Activated CD4-positive, alpha-beta T cell treated with anti-CD3 and anti-CD28 coated beads, Interleukin-2, amount 10 ng/mL, durations not matched to agents 24 days and 14 days (primary cell): ENCODE measurements at regions of chr2 and their contacts with region 1.

Region 1: GRCh38 chr2:119759451-119760236 is at the start of gene PTPN4:
- DNase-seq: peak; percentile 98
- H3K4me3 Mint-ChIP-seq: peak within 1 kb of the TSS; percentile 92
- H3K27ac Mint-ChIP-seq: peak within 1 kb of the TSS; percentile 93
- H3K4me1 Mint-ChIP-seq: peaks cover 36% of the 10 kb centered on the region
- H3K27me3 Mint-ChIP-seq: no peaks in the 10 kb centered on the region
- total RNA-seq, gene PTPN4: 21.9 and 22.0 TPM in 2 replicates

Region 2: DNA sequence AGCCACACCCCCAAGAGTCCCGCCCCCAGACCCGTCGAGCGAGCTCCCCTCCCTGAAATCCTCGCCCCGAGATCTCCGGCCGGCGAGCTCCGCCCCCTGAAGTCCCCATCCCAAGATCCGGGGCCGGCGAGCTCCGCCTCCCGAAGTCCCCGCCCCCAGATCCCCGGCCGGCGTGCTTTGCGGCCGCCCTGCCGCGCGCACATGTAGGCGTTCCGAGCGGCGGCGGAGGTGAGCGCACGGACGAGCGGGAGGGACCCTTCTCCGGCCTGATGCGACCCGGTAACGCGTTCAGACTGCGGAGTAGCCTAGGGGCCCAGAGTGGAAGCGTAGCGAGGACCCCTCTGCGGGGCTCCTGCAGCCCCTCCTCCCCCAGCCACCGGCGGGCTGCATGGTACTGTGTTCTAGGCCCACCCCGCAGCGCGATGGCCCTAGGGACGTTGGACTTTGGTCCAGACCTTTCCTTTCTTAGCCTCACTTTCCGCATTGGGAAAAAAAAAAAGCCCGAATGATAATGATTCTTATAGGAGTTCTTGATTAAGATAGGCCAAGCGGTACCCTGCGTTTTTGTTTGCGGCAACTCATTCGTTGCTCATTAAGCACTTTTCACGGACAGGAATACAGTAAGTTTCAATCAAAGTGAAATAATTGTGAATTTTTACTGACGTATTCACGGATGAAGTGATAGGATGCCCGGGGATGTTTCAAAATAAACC is 80.5 kb before region 1 on chr2 and contains the start of gene TMEM177:
- intact Hi-C with region 1: loop called (anchors 1 kb)
- DNase-seq: peak; percentile 98
- H3K4me3 Mint-ChIP-seq: peak within 1 kb of the TSS; percentile 87
- H3K27ac Mint-ChIP-seq: peak within 1 kb of the TSS; percentile 76
- H3K4me1 Mint-ChIP-seq: peaks cover 31% of the 10 kb centered on the region
- H3K27me3 Mint-ChIP-seq: peaks cover 12% of the 10 kb centered on the region
- total RNA-seq, gene TMEM177: 19.0 and 20.6 TPM in 2 replicates

Region 3: GRCh38 chr2:119702918-119703401 is 56.7 kb before region 1 on chr2:
- intact Hi-C with region 1: loop called (anchors 2 kb)
- DNase-seq: peak; percentile 91
- H3K4me3 Mint-ChIP-seq: no peak overlapping the region
- H3K27ac Mint-ChIP-seq: no peak overlapping the region
- H3K4me1 Mint-ChIP-seq: peaks cover 10% of the 10 kb centered on the region
- H3K27me3 Mint-ChIP-seq: no peaks in the 10 kb centered on the region

Region 4: GRCh38 chr2:119862127-119862889 is 102.7 kb after region 1 on chr2:
- intact Hi-C with region 1: loop called (anchors 1 kb)
- DNase-seq: peak; percentile 64
- H3K4me3 Mint-ChIP-seq: peak overlapping the region; percentile 56
- H3K27ac Mint-ChIP-seq: peak overlapping the region; percentile 62
- H3K4me1 Mint-ChIP-seq: peaks cover 40% of the 10 kb centered on the region
- H3K27me3 Mint-ChIP-seq: no peaks in the 10 kb centered on the region

Region 5: DNA sequence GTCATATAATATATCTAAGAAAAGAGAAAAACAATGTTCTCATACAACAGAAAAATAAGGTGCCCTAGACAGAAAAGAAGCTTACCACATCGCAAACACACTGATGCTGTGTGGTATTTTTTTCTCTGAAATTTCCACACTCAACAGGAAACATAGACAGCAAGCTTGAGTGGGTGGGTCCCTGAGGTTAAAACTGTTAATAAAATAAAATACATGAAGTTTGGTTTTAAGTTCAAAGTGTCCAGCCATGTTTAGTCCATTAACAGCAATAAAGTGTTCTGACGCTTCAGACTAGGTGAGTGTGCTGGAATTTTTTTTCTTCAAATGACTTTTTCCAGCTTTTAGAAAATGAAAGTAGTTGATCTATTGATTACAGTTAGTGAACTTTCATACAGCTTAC is 169.9 kb after region 1 on chr2:
- intact Hi-C with region 1: loop called (anchors 2 kb)
- DNase-seq: peak; percentile 84
- H3K4me3 Mint-ChIP-seq: peak overlapping the region; percentile 75
- H3K27ac Mint-ChIP-seq: peak overlapping the region; percentile 85
- H3K4me1 Mint-ChIP-seq: peaks cover 45% of the 10 kb centered on the region
- H3K27me3 Mint-ChIP-seq: no peaks in the 10 kb centered on the region

Region 6: DNA sequence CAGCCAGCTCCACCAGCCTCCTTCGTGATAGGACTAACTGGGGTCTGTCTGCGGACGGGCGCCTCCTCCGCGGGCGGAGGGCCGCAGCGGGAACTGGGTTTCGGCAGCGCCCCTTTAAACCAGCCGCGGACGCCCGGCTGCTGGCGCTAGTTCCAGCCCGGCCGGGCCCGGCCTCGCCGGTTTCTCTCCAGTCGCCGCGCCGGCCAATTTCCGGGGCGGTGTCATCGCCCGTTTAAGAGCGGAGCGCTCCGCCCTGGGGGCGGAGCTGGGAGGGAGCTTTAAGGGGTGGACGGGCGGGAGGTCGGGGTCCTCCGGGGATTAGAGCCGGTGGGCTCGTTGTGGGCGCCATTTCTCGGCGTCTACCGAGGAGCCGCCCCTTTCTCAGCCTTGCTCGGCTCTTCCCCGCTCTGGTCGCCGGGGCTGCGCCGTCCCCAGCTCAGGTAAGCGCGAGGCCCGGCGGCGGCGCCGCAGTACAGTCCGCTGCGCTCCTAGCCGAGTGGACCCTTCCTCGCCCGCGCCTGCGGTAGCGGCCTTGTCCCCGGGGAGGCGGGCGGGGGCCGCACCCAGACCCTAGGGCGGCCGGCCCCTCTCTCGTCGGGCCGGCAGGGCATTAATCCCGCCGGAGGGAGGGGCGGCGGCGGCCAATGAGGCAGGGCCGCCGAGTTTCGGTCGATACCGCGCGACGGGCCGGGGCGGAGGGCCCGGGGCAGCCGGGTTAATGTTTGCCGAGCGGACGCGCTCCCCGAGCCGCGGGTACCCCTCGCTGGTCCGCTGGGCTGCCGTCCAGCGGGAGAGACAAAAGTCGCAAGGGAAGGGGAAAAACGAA is 253.3 kb after region 1 on chr2 and contains the start of gene EPB41L5:
- intact Hi-C with region 1: loop called (anchors 1 kb)
- DNase-seq: peak; percentile 94
- H3K4me3 Mint-ChIP-seq: peak within 1 kb of the TSS; percentile 75
- H3K27ac Mint-ChIP-seq: no peak within 1 kb of the TSS
- H3K4me1 Mint-ChIP-seq: peaks cover 11% of the 10 kb centered on the region
- H3K27me3 Mint-ChIP-seq: peaks cover 13% of the 10 kb centered on the region
- total RNA-seq, gene EPB41L5: 1.5 and 2.2 TPM in 2 replicates

Region 7: DNA sequence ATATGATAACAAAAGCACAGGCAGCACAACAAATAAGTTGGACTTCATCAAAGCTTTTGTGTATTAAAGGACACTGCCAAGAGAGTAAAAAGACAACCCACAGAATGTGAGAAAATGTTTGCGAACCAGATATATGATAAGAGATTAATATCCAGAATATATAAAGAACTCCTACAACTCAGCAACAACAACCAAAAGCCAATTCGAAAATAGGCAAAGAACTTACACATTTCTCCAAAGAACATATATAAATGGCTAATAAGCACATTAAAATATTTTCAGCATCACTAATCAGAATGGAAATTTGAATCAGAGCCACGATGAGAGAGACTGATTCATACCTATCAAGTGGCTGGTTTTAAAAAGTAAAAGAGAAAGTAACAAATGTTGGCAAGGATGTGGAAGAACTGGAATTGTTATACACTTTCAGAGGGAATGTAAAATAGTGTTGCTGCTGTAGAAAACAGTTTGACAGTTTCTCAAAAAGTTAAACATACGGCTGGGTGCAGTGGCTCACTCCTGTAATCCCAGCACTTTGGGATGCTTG is 278.4 kb after region 1 on chr2:
- intact Hi-C with region 1: no loop called
- DNase-seq: no peak
- H3K4me3 Mint-ChIP-seq: no peak overlapping the region
- H3K27ac Mint-ChIP-seq: no peak overlapping the region
- H3K4me1 Mint-ChIP-seq: no peaks in the 10 kb centered on the region
- H3K27me3 Mint-ChIP-seq: peaks cover 2% of the 10 kb centered on the region

Region 8: DNA sequence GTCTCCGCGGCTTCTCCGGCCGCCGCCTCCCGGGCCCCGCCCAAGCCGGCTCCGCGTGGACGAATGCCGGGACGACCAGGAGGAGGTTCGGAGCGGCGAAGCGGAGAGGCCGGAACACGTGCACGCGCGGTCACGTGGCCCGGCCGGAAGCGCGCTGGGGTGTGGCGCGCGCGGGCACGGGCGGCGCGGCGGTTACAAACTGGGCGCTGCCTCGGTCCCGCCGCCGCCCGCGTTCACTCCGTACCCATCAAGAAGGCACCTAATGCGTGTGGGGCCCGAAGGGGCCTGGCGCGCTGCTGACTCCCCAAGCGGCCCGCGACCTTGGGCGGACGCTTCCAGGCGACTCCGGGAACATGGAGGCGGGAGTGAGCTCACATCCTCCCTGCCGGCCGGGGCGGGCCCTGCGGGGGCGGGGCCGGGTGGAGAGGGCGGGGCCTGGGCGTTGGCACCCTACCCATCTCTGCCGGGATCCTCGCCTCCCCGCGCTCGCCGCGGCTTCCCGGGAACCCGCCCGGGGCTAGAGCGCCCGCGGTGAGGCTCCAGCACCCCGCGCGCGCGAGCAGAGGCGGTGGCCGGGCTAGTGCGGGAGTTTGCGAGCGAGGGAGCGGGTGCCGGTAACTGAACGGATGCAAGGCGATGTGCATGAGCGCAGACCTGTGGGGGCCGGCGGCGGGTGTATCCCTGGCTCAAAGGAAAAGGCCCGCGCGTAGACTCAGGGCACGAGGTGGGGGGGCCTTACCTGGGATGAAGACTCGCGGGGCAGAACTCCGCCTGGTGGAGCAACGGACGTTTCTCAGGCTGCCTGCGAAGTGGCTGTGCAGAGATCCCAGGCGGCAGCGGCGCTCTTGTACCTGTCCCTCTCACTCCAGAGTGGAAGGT is 463.6 kb after region 1 on chr2 and contains the start of gene TMEM185B:
- intact Hi-C with region 1: loop called (anchors 1 kb)
- DNase-seq: peak; percentile 98
- H3K4me3 Mint-ChIP-seq: peak within 1 kb of the TSS; percentile 87
- H3K27ac Mint-ChIP-seq: peak within 1 kb of the TSS; percentile 92
- H3K4me1 Mint-ChIP-seq: peaks cover 59% of the 10 kb centered on the region
- H3K27me3 Mint-ChIP-seq: no peaks in the 10 kb centered on the region
- total RNA-seq, gene TMEM185B: 44.3 and 45.8 TPM in 2 replicates